Astrocyte of the cerebellum (primary cell): ENCODE measurements at regions of chr3 and their contacts with region 1.

Region 1: GRCh38 chr3:62335196-62335595 is 38.2 kb downstream of the FEZF2 start:
- DNase-seq: no peak
- H3K4me3 ChIP-seq: no peak overlapping the region
- CTCF ChIP-seq: no peak

Region 2: DNA sequence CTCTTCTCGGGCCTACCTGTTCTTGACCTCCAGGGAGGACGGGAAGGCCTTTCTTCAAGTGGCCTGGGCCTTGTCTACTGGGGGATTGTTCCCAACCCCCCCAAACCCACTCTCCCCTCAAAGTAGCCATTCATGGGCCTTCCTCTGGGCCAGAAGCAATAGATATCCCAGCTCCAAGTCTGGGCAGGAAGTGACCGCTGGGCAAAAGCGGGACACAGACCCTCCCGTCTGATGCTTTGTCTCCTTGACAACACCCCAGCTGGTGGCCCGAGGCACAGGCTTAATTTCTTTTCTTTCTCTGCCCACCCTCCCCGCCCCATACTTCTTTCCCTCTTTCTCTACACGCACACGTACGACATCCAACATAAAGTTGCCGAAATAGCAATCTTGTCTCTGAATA is 79.6 kb after region 1 on chr3:
- in situ Hi-C with region 1: loop called (anchors 5 kb)
- DNase-seq: no peak
- H3K4me3 ChIP-seq: no peak overlapping the region
- CTCF ChIP-seq: no peak

Region 3: GRCh38 chr3:62554323-62554722 is 219.1 kb after region 1 on chr3:
- in situ Hi-C with region 1: loop called (anchors 5 kb)
- DNase-seq: no peak
- H3K4me3 ChIP-seq: no peak overlapping the region
- CTCF ChIP-seq: peak; percentile 40